Activated B cell treated with CpG ODN at 0.5 μM for 24 hours (primary cell): ENCODE measurements at regions of chr13 and their contacts with region 1.

Region 1: GRCh38 chr13:31909864-31910551 is 121.6 kb upstream of the FRY start:
- DNase-seq: no peak
- ATAC-seq: peak; percentile 45
- H3K4me3 Mint-ChIP-seq: no peak overlapping the region
- H3K27ac Mint-ChIP-seq: no peak overlapping the region
- H3K4me1 Mint-ChIP-seq: peaks cover 14% of the 10 kb centered on the region
- H3K27me3 Mint-ChIP-seq: peaks cover 4% of the 10 kb centered on the region
- CTCF ChIP-seq: peak; percentile 96

Region 2: GRCh38 chr13:31927219-31927653 is 17.2 kb after region 1 on chr13:
- CTCF ChIA-PET with region 1: interaction called, 16 read pairs
- POLR2A ChIA-PET with region 1: interaction called, 4 read pairs
- intact Hi-C with region 1: no loop called
- DNase-seq: no peak
- ATAC-seq: no peak
- H3K4me3 Mint-ChIP-seq: no peak overlapping the region
- H3K27ac Mint-ChIP-seq: no peak overlapping the region
- H3K4me1 Mint-ChIP-seq: peaks cover 4% of the 10 kb centered on the region
- H3K27me3 Mint-ChIP-seq: no peaks in the 10 kb centered on the region
- CTCF ChIP-seq: no peak

Region 3: DNA sequence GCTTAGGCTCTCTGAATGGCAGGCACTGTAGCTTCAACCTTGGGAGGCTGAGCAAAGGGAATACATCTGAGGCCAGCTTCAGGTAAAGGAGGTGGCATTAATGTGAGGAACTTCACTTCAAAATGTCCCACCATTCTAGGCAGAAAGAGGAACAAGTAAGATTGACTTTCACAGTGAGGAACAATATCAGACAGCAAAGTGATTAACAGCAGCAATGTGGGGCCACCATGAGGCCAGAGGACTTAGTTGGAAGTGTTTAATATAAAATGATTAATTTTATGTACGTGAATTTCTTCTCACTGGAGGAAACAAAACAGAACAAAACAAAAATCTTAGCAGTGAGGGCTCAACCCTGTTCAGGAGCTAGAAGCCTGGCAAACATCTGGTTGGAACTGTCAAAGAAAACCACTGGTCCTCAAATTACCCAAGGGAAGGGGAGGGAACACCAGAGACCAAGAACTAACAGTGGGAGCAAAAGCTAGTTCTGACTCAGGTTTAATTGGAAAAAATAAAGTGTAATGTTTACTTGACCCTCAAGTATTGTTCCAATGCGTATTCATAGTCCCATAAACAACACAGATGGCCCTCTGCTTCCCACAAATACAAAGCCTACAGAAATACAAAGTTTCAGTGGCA is 77.6 kb after region 1 on chr13:
- CTCF ChIA-PET with region 1: interaction called, 40 read pairs
- POLR2A ChIA-PET with region 1: interaction called, 7 read pairs
- intact Hi-C with region 1: loop called (anchors 1 kb)
- DNase-seq: no peak
- ATAC-seq: peak; percentile 71
- H3K4me3 Mint-ChIP-seq: no peak overlapping the region
- H3K27ac Mint-ChIP-seq: no peak overlapping the region
- H3K4me1 Mint-ChIP-seq: peaks cover 9% of the 10 kb centered on the region
- H3K27me3 Mint-ChIP-seq: no peaks in the 10 kb centered on the region
- CTCF ChIP-seq: no peak

Region 4: DNA sequence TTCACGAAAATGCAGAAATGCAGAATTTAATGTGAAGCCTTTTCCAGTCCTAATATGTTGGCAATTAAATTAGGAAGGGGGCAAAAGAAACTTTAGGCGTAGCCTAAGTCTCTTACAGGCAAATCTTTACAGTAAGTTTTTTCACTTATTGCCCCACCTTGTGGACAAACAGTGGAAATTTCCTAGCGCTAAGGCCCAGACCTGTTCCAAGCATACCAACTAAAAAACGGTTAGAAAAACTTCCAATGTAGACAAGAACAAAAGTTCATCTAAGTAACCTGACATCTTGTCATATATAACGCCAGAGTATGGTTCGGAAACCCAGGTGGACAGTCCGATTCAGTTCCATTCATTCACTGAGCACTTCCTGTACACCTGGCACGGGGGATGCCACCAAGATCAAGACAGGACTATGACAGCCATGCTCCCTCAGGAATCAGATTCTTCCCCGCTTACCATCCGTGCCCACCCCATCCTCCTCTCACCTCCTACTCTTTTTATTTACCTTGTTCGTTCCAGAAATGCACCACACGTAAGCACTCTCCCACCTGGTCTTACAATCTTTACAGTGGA is 400.2 kb after region 1 on chr13:
- CTCF ChIA-PET with region 1: interaction called, 20 read pairs
- POLR2A ChIA-PET with region 1: interaction called, 6 read pairs
- intact Hi-C with region 1: loop called (anchors 1 kb)
- DNase-seq: no peak
- ATAC-seq: peak; percentile 56
- H3K4me3 Mint-ChIP-seq: peak overlapping the region; percentile 13
- H3K27ac Mint-ChIP-seq: no peak overlapping the region
- H3K4me1 Mint-ChIP-seq: peaks cover 18% of the 10 kb centered on the region
- H3K27me3 Mint-ChIP-seq: no peaks in the 10 kb centered on the region
- CTCF ChIP-seq: no peak

Region 5: GRCh38 chr13:32443111-32443510 is 533.1 kb after region 1 on chr13:
- CTCF ChIA-PET with region 1: interaction called, 4 read pairs
- POLR2A ChIA-PET with region 1: no interaction called
- intact Hi-C with region 1: loop called (anchors 1 kb)
- DNase-seq: no peak
- ATAC-seq: peak; percentile 84
- H3K4me3 Mint-ChIP-seq: peak overlapping the region; percentile 15
- H3K27ac Mint-ChIP-seq: peak overlapping the region; percentile 71
- H3K4me1 Mint-ChIP-seq: peaks cover 21% of the 10 kb centered on the region
- H3K27me3 Mint-ChIP-seq: no peaks in the 10 kb centered on the region
- CTCF ChIP-seq: peak; percentile 26